ENCODE measurements at regions of chr12 and their contacts with region 1.

Region 1: GRCh38 chr12:121637231-121637914 is 11.0 kb downstream of the ORAI1 start:
- DNase-seq: no peak
- ATAC-seq: peak; percentile 40; the same call in 1 of the 2 replicates
- H3K4me3 ChIP-seq: no peak overlapping the region
- H3K27ac ChIP-seq: no peak overlapping the region
- H3K4me1 ChIP-seq: peaks cover 9% of the 10 kb centered on the region
- H3K27me3 ChIP-seq: no peaks in the 10 kb centered on the region
- CTCF ChIP-seq: no peak

Region 2: GRCh38 chr12:120242275-120242799 is 1395.0 kb before region 1 on chr12:
- CTCF ChIA-PET with region 1: no interaction called
- POLR2A ChIA-PET with region 1: interaction called, 10 read pairs
- in situ Hi-C with region 1: no loop called
- intact Hi-C with region 1: no loop called
- DNase-seq: no peak
- ATAC-seq: no peak
- H3K4me3 ChIP-seq: no peak overlapping the region
- H3K27ac ChIP-seq: peak overlapping the region; percentile 87
- H3K4me1 ChIP-seq: peaks cover 95% of the 10 kb centered on the region
- H3K27me3 ChIP-seq: no peaks in the 10 kb centered on the region
- CTCF ChIP-seq: no peak

Region 3: DNA sequence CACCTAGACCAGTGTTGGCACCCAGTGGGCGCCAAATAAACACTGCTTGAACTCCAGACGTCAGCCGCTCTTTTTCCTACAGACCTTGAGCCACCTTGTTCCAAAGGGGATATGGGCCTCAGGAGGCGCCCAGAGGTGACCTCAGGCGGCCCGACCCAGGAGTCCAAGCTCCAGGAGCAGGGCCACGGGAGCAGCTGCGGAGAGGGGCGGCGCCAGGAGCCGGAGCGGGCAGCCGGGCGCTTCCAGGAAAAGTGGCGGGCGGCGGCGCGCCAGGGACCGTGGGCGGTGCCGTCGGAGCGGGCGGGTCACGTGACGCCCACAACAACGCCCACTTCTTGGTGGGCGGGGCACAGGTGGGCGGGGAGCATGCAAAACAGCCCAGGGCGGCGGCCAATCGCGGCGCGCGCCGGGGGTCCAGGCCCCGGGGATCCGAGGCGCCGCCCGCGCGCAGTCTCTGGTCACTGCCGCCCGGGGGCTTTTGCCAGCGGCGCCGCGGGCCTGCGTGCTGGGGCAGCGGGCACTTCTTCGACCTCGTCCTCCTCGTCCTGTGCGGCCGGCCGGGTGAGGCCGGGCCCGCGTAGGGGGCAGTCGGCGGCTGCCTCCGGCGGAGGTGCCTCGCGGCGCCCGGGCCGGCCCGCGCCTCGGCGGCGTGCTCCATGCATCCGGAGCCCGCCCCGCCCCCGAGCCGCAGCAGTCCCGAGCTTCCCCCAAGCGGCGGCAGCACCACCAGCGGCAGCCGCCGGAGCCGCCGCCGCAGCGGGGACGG is 11.1 kb before region 1 on chr12 and contains the start of gene ORAI1:
- CTCF ChIA-PET with region 1: interaction called, 11 read pairs
- POLR2A ChIA-PET with region 1: no interaction called
- in situ Hi-C with region 1: no loop called
- intact Hi-C with region 1: no loop called
- DNase-seq: no peak
- ATAC-seq: peak; percentile 90
- H3K4me3 ChIP-seq: peak within 1 kb of the TSS; percentile 73 to 94
- H3K27ac ChIP-seq: peak within 1 kb of the TSS; percentile 84
- H3K4me1 ChIP-seq: peaks cover 25% of the 10 kb centered on the region
- H3K27me3 ChIP-seq: no peaks in the 10 kb centered on the region
- CTCF ChIP-seq: no peak
- total RNA-seq, gene ORAI1: 36.7 TPM

Region 4: GRCh38 chr12:121668750-121669520 is 31.6 kb after region 1 on chr12:
- CTCF ChIA-PET with region 1: interaction called, 8 read pairs
- POLR2A ChIA-PET with region 1: interaction called, 14 read pairs
- in situ Hi-C with region 1: no loop called
- intact Hi-C with region 1: no loop called
- DNase-seq: no peak
- ATAC-seq: no peak
- H3K4me3 ChIP-seq: no peak overlapping the region
- H3K27ac ChIP-seq: no peak overlapping the region
- H3K4me1 ChIP-seq: peaks cover 12% of the 10 kb centered on the region
- H3K27me3 ChIP-seq: no peaks in the 10 kb centered on the region
- CTCF ChIP-seq: no peak; the same call in 1 of the 2 replicates

Measured in Panc1 (cell line).